CD4-positive, alpha-beta T cell (primary cell): ENCODE measurements at regions of chr1 and their contacts with region 1.

Region 1: DNA sequence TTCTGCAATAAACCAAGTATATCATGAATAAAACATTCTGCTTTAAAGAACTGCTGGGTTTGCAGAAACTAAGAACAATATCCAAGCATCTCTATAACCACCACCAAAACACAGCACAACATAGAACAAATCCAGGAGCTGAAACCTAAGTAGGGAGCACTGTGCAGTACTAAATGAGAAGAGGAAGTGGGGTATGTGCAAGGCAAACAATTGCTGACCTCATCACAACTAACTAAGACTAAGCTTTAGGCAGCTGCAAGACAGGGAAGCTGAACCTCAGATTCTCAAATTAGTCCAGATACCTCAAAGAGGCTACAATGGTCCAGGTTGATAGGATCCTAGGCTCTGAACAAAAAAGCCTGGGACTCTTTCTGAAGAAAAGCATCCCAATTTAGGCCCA is 172.6 kb downstream of the SLC44A5 start:
- DNase-seq: no peak
- ATAC-seq: no peak
- H3K4me3 ChIP-seq: no peak overlapping the region
- H3K4me3 Mint-ChIP-seq: no peak overlapping the region
- H3K27ac ChIP-seq: no peak overlapping the region
- H3K27ac Mint-ChIP-seq: no peak overlapping the region
- H3K4me1 ChIP-seq: no peaks in the 10 kb centered on the region
- H3K4me1 Mint-ChIP-seq: no peaks in the 10 kb centered on the region
- H3K27me3 ChIP-seq: no peaks in the 10 kb centered on the region
- H3K27me3 Mint-ChIP-seq: no peaks in the 10 kb centered on the region
- CTCF ChIP-seq: no peak

Region 2: GRCh38 chr1:75475696-75476095 is 37.3 kb after region 1 on chr1:
- CTCF ChIA-PET with region 1: no interaction called
- POLR2A ChIA-PET with region 1: no interaction called
- intact Hi-C with region 1: loop called in 1 of 2 experiments (anchors 2 kb)
- DNase-seq: no peak
- ATAC-seq: no peak
- H3K4me3 ChIP-seq: no peak overlapping the region
- H3K4me3 Mint-ChIP-seq: no peak overlapping the region
- H3K27ac ChIP-seq: no peak overlapping the region
- H3K27ac Mint-ChIP-seq: no peak overlapping the region
- H3K4me1 ChIP-seq: no peaks in the 10 kb centered on the region
- H3K4me1 Mint-ChIP-seq: no peaks in the 10 kb centered on the region
- H3K27me3 ChIP-seq: no peaks in the 10 kb centered on the region
- H3K27me3 Mint-ChIP-seq: no peaks in the 10 kb centered on the region
- CTCF ChIP-seq: no peak